MCF 10A (cell line): ENCODE measurements at regions of chr7 and their contacts with region 1.

Region 1: DNA sequence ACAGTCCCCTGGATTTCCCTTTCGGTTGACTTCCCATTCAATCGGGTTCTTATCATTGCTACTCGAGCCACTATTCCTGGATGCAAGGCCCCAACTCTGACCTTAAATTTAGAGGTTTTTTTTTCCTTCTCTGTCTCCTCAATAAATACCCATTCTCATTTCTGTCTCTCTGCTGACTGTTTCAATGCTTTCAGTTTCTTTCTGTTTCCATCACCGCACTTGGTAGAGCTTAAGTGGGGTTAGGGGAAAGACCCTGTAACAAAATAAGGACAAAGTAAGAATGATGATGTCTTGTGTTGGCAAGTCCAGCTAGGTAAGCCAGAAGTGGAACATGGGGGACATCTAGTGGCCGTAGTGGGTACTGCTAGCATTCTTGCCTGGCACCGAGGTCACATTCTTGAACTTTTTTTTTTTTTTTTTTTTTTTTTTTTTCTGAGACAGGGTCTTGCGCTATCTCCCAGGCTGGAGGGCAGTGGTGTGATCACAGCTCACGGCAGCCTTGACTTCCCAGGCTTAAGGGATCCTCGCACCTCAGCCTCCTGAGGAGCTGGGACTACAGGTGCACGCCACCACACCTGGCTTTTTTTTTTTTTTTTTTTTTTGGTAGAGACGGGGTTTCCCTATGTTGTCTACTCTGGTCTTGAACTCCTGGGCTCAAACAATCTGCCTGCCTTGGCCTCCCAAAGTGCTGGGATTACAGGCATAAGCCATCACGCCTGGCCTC is 40.3 kb downstream of the ZC3HC1 start:
- DNase-seq: peak; percentile 86
- H3K4me3 Mint-ChIP-seq: peak overlapping the region; percentile 2
- H3K27ac Mint-ChIP-seq: peak overlapping the region; percentile 86
- H3K4me1 Mint-ChIP-seq: peaks cover 21% of the 10 kb centered on the region
- H3K27me3 Mint-ChIP-seq: no peaks in the 10 kb centered on the region
- CTCF ChIP-seq: peak; percentile 69

Region 2: DNA sequence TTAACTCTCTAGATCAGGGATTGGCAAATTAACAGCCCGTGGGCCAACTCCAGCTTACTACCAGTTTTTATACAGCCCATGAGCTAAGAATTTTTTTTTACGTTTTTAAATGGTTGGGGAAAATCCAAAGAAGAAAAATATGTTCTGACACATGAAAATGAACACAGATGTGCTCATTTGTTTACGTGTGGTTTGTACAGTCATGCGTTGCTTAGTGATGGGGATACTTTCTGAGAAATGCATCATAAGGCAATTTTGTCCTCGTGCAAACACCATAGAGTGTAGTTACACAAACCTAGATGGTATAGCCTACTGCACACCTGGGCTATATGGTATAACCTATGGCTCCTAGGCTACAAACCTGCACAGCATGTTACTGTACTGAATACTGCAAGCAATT is 516.8 kb before region 1 on chr7:
- CTCF ChIA-PET with region 1: no interaction called
- POLR2A ChIA-PET with region 1: no interaction called
- intact Hi-C with region 1: loop called (anchors 5 kb)
- DNase-seq: peak; percentile 61
- H3K4me3 Mint-ChIP-seq: no peak overlapping the region
- H3K27ac Mint-ChIP-seq: peak overlapping the region; percentile 89
- H3K4me1 Mint-ChIP-seq: no peaks in the 10 kb centered on the region
- H3K27me3 Mint-ChIP-seq: no peaks in the 10 kb centered on the region
- CTCF ChIP-seq: no peak

Region 3: DNA sequence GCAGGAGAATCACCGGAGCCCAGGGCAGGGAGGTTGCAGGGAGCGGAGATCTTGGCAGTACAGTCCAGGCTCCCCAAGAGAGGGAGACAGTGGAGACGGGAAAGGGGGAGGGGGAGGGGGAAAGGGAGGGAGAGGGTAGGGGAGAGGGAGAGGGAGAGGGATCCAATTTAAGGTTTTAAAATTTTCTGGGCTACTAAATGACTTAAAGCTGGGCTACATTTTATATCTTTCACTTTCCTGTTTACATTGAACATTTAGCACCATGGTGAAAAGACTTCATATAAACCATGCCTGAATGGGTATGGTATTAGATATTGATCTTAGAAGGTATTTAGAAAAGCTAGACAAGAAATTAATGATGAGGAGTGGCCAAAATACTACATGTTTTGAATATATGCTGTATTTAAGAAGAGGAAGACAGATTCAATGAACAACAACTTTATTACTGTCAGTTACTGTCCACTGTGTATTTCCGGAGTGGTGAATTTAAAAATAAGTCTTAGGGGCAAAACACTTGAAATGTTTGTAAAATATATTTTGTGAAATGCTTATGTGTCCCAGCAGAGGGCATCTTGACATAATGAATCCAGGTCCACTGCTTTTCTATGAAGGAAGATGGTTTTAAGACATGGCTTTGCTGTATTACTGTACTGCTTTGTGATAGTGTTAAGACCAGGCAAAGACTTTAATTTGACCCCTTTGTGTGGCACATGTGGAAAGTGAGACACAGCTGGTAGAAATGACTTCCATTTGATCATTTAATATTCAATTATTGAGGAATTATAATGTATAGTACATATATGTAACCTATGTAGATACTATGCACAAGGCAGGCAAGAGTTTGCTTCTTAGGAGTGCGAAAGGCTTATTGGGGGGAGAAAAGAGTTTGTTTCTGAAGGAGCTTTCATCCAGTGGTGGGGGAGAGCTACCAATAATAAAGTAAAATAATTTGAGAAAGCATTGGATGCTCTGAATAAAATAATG is 346.5 kb before region 1 on chr7:
- CTCF ChIA-PET with region 1: interaction called, 30 read pairs
- POLR2A ChIA-PET with region 1: interaction called, 5 read pairs
- intact Hi-C with region 1: loop called (anchors 1 kb)
- DNase-seq: peak; percentile 66
- H3K4me3 Mint-ChIP-seq: no peak overlapping the region
- H3K27ac Mint-ChIP-seq: peak overlapping the region; percentile 64
- H3K4me1 Mint-ChIP-seq: peaks cover 12% of the 10 kb centered on the region
- H3K27me3 Mint-ChIP-seq: no peaks in the 10 kb centered on the region
- CTCF ChIP-seq: peak; percentile 63

Region 4: GRCh38 chr7:129825496-129826267 is 185.2 kb before region 1 on chr7:
- CTCF ChIA-PET with region 1: interaction called, 66 read pairs
- POLR2A ChIA-PET with region 1: interaction called, 17 read pairs
- intact Hi-C with region 1: loop called (anchors 1 kb)
- DNase-seq: peak; percentile 72
- H3K4me3 Mint-ChIP-seq: peak overlapping the region; percentile 89
- H3K27ac Mint-ChIP-seq: peak overlapping the region; percentile 5
- H3K4me1 Mint-ChIP-seq: peaks cover 20% of the 10 kb centered on the region
- H3K27me3 Mint-ChIP-seq: no peaks in the 10 kb centered on the region
- CTCF ChIP-seq: peak; percentile 91

Region 5: DNA sequence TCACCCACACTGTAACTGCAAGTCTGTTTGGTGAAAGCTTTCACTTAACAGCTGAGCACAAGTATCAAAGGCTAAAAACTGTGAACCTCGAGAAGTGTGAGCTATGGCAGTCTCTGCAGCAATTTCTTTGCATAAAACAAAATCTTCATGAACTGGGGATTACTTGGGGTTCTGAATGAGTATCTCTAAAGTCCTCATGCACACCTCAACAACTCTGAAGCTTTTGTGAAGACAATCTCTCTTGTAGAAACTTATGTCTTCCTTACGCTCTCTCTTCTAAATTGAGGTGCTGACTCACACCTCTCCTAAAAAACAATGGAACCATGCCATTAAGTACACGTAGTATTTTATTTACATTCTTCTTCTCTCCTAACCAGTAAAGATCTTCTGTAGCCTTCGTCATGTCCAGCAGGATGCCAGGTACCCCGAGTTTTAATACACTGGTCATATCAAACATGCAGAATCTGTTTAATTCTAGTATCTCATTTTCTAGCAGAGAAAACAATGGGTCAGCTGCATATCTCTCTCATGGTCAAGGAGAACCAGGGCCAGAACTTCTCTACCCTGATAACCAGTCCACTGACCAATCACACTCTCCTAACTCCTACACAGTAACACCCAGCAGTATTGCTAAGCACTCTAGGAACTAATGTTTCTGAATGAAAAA is 135.0 kb before region 1 on chr7:
- CTCF ChIA-PET with region 1: interaction called, 6 read pairs
- POLR2A ChIA-PET with region 1: interaction called, 11 read pairs
- intact Hi-C with region 1: no loop called
- DNase-seq: peak; percentile 69
- H3K4me3 Mint-ChIP-seq: peak overlapping the region; percentile 69
- H3K27ac Mint-ChIP-seq: peak overlapping the region; percentile 90
- H3K4me1 Mint-ChIP-seq: peaks cover 35% of the 10 kb centered on the region
- H3K27me3 Mint-ChIP-seq: no peaks in the 10 kb centered on the region
- CTCF ChIP-seq: no peak

Region 6: GRCh38 chr7:129958643-129959470 is 52.0 kb before region 1 on chr7:
- CTCF ChIA-PET with region 1: interaction called, 20 read pairs
- POLR2A ChIA-PET with region 1: interaction called, 187 read pairs
- intact Hi-C with region 1: no loop called
- DNase-seq: peak; percentile 96
- H3K4me3 Mint-ChIP-seq: peak overlapping the region; percentile 46
- H3K27ac Mint-ChIP-seq: peak overlapping the region; percentile 99
- H3K4me1 Mint-ChIP-seq: peaks cover 36% of the 10 kb centered on the region
- H3K27me3 Mint-ChIP-seq: no peaks in the 10 kb centered on the region
- CTCF ChIP-seq: no peak

Region 7: DNA sequence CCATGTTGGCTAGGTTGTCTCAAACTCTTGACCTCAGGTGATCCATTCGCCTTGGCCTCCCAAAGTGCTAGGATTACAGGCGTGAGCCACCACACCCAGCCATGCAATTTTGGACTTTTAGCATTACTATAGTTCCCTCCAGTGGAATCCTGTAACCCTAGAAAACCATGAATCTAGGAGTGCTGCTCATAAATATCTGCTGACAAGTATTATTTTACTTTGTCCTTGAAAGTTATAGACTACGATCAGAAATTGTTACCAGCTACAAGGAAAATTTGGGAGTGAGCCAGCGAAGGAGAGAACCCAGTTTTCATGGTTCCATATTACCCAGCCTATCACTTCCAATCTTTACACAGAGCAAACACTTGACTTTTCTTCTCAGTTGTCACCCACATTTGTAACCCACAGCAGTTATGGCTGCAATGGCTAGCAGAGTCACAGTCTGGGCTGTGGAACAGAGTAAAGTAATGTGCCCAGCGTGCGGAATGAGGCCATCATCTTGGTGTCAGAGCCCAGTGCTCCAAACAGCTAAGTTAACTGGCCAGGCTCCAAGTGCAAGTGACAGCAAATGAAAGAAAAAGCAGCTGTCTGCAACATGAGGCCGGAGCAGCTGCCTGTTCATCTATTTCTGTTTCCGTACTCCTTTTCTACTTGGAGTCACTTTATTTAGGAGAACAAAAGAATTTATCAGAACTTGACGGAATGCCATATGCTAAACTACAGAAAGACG is 10.4 kb after region 1 on chr7:
- CTCF ChIA-PET with region 1: interaction called, 15 read pairs
- POLR2A ChIA-PET with region 1: no interaction called
- intact Hi-C with region 1: no loop called
- DNase-seq: no peak
- H3K4me3 Mint-ChIP-seq: no peak overlapping the region
- H3K27ac Mint-ChIP-seq: no peak overlapping the region
- H3K4me1 Mint-ChIP-seq: peaks cover 7% of the 10 kb centered on the region
- H3K27me3 Mint-ChIP-seq: no peaks in the 10 kb centered on the region
- CTCF ChIP-seq: no peak

Region 8: DNA sequence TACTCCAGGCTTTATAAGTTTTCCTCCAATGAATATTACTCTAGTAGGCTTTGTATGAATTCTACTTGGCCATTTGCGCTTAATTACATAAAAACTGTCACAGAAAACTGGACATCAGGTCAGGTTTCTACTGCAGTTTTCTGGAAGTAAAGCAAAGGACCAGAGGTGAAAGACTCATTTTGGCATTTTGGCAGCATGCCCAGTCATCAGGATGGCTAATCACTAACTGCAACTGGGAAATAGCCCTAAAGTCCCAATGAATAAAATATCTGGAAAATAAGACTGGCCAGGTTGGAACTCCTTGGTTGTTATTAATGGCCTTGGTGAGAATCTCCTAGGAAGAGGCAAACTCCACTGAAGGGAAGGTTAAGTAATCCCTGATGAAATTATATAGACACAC is 582.2 kb after region 1 on chr7:
- CTCF ChIA-PET with region 1: no interaction called
- POLR2A ChIA-PET with region 1: no interaction called
- intact Hi-C with region 1: no loop called
- DNase-seq: peak; percentile 30
- H3K4me3 Mint-ChIP-seq: no peak overlapping the region
- H3K27ac Mint-ChIP-seq: no peak overlapping the region
- H3K4me1 Mint-ChIP-seq: no peaks in the 10 kb centered on the region
- H3K27me3 Mint-ChIP-seq: no peaks in the 10 kb centered on the region
- CTCF ChIP-seq: no peak